ENCODE measurements at regions of chr20 and their contacts with region 1.

Region 1: DNA sequence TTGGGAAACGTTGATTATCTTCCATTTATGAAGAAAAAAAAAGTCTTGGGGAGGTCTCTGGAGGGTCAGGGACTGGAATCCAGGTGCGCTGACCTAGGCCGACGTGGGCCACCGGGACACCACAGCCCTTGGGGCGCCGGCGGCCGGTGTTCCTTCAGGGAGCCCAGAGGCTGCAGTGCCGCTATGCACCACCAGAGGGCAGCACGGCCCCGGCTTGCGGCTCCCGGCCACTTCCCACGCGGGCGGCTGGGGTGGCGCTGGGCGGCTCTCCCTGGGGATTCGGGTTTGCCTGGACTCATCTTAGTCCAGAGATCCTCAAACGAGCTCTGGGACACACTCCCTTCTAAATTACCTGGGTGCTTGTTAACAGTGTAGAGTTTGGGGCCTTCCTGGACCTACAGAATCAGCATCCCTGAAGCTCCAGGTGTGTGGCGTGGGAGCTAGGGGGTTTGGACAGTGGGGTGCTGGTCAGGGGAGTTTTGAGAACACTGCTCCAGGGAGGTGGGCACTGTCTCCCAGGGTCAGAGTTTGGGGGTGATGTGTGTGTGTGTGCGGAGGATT is 23.0 kb upstream of the GTSF1L start:
- DNase-seq: no peak
- H3K4me3 ChIP-seq: no peak overlapping the region
- H3K27me3 ChIP-seq: no peaks in the 10 kb centered on the region
- CTCF ChIP-seq: peak; percentile 98

Region 2: DNA sequence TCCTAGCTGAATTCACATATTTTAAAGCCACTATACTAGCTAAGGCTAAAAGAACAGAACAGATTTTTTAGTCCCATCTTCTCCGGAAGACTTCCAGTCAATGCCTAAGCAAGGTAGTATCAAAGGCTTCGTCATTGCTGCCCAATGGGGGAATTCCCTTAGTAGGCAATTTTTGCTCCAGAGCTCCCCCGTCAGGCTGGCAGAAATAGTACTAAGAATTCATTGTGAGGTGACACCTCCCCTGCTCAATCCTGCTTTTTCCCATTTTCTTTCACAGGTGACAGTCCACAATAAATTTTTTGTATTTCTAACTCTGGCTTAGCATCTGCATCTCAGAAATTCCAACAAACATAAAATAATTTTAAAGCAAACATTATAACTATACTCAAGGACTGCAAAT is 344.9 kb before region 1 on chr20:
- CTCF ChIA-PET with region 1: no interaction called
- POLR2A ChIA-PET with region 1: no interaction called
- DNase-seq: no peak
- H3K4me3 ChIP-seq: no peak overlapping the region
- H3K27me3 ChIP-seq: no peaks in the 10 kb centered on the region
- CTCF ChIP-seq: peak; percentile 39

Region 3: GRCh38 chr20:43767686-43768474 is 18.1 kb after region 1 on chr20:
- CTCF ChIA-PET with region 1: interaction called, 29 read pairs
- POLR2A ChIA-PET with region 1: no interaction called
- DNase-seq: no peak
- H3K4me3 ChIP-seq: no peak overlapping the region
- H3K27me3 ChIP-seq: peaks cover 9% of the 10 kb centered on the region
- CTCF ChIP-seq: no peak

Region 4: GRCh38 chr20:44068316-44069201 is 318.7 kb after region 1 on chr20:
- CTCF ChIA-PET with region 1: interaction called, 15 read pairs
- POLR2A ChIA-PET with region 1: no interaction called
- DNase-seq: no peak
- H3K4me3 ChIP-seq: no peak overlapping the region
- H3K27me3 ChIP-seq: no peaks in the 10 kb centered on the region
- CTCF ChIP-seq: no peak

Region 5: DNA sequence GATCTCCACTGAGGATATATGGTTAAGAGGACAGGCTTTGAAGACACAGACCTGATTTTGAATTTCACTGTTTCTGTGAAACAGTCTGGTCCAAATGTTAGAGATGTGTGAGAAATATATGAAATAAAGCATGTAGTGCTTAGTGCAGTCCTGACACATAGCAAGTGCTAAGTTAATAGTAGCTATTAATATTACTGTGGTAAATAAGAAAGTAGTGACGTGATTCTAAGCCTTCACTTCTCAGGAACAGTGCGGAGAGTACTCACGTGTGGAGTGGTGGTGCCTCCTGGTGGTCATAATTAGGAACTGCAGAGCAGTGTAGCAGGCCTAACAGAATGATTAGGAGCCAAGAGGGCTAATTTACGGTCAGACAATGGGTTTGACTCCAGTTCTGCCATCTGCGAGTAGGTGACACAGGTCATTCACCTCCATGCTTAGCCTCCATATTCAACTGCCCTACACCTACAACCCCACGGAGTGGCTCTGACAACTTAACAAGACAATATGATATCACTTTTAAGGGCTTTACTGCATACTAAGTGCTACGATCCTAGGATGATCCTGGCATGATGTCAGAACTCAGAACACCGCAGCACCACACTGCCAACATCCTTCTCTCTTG is 330.9 kb after region 1 on chr20:
- CTCF ChIA-PET with region 1: interaction called, 140 read pairs
- POLR2A ChIA-PET with region 1: interaction called, 3 read pairs
- DNase-seq: no peak
- H3K4me3 ChIP-seq: no peak overlapping the region
- H3K27me3 ChIP-seq: no peaks in the 10 kb centered on the region
- CTCF ChIP-seq: peak; percentile 94